Aorta (tissue), 5 donors: ENCODE measurements at regions of chr5 and their contacts with region 1.

Region 1: GRCh38 chr5:141369994-141370848 is at the start of gene PCDHGB3:
- DNase-seq: no peak
- ATAC-seq: no peak
- H3K4me3 ChIP-seq: no peak within 1 kb of the TSS
- H3K27ac ChIP-seq: no peak within 1 kb of the TSS
- H3K4me1 ChIP-seq: no peaks in the 10 kb centered on the region
- H3K27me3 ChIP-seq: no peaks in the 10 kb centered on the region
- total RNA-seq, gene PCDHGB3: 7.4 to 9.7 TPM

Region 2: DNA sequence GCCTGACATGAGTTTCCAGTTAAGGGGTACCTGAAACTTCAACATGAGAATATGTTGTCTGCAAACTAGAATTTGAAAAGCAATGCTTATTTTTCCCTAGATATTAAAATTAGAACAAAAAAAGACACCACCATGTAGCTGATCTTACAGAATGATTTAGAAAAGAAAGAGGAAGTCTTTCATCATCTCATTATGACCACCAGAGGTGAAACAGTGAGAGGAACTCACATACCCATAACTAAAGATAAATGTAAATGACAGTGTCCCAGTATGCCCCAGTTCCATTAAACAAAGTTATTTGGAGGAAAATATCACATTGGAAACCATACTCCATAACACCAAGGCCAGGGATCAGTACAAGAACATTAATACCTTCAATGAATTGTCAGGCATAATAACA is 56.5 kb before region 1 on chr5:
- intact Hi-C with region 1: no loop called
- DNase-seq: no peak
- ATAC-seq: no peak
- H3K4me3 ChIP-seq: no peak overlapping the region
- H3K27ac ChIP-seq: no peak overlapping the region
- H3K4me1 ChIP-seq: no peaks in the 10 kb centered on the region
- H3K27me3 ChIP-seq: no peaks in the 10 kb centered on the region

Region 3: DNA sequence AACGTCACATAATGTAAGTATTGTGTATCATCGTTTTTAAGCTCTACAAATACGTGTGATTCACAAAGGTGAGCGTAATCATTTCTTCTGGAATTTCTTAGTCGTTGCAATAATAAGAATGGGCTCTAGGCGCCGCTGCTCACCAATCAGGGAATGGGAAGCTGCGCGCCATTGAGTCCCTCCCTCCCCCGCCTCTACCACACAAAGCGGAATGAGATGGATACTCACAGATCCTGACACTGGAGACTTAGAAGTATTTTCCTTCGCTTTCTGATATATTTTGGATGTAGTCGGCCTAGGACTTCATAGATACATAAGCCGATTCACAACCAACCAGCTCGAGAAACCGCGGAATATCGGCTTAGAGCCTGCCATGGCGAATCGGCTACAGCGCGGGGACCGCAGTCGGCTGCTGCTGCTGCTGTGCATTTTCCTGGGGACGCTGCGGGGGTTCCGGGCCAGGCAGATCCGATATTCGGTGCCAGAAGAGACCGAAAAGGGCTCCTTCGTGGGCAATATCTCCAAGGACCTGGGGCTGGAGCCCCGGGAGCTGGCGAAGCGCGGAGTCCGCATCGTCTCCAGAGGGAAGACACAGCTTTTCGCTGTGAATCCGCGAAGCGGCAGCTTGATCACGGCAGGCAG is 50.8 kb after region 1 on chr5 and contains the start of gene PCDHGA11:
- intact Hi-C with region 1: loop called in 1 of 2 experiments (anchors 5 kb)
- DNase-seq: no peak
- ATAC-seq: no peak
- H3K4me3 ChIP-seq: peak within 1 kb of the TSS in 1 of 2 donors; percentile 0
- H3K27ac ChIP-seq: no peak within 1 kb of the TSS
- H3K4me1 ChIP-seq: no peaks in the 10 kb centered on the region
- H3K27me3 ChIP-seq: no peaks in the 10 kb centered on the region
- total RNA-seq, gene PCDHGA11: 7.1 to 9.2 TPM